CD8-positive, alpha-beta T cell (primary cell): ENCODE measurements at regions of chr1 and their contacts with region 1.

Region 1: GRCh38 chr1:25819576-25820246 is at the start of gene MTFR1L:
- DNase-seq: peak; percentile 78 to 96 (median 94)
- ATAC-seq: peak; percentile 87
- H3K4me3 ChIP-seq: peak within 1 kb of the TSS; percentile 74 to 95
- H3K4me3 Mint-ChIP-seq: peak within 1 kb of the TSS; percentile 94
- H3K27ac ChIP-seq: peak within 1 kb of the TSS; percentile 65 to 77
- H3K27ac Mint-ChIP-seq: peak within 1 kb of the TSS; percentile 97
- H3K4me1 ChIP-seq: peaks cover 20% of the 10 kb centered on the region
- H3K4me1 Mint-ChIP-seq: peaks cover 35% of the 10 kb centered on the region
- H3K27me3 ChIP-seq: no peaks in the 10 kb centered on the region
- H3K27me3 Mint-ChIP-seq: no peaks in the 10 kb centered on the region
- CTCF ChIP-seq: no peak
- total RNA-seq, gene MTFR1L: 22.9 to 25.7 TPM

Region 2: DNA sequence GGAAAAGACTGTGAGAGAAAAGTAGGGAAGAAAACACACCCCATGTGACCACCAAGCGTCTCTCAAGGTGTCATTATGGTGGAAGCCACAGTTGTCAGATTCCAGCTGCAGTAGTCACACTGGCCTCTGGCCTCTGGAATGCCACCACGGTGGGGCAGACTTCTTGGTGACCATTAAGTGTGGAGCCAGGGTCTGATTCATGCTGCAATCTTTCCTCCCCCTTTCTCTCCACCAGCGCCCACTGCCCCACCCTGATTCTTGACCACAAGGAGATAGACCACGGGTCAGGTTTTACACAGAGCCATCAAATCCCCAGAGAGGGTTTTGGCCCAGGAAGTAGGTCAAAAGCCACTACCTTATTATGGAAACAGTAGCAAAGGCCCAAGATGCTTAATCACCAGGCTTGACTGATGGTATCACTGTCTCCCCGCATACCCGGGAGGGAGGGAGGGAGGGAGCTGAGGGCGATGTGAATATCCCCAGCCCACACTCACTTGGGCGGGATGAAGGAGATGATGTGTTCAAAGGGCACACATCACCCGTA is 1553.2 kb before region 1 on chr1:
- CTCF ChIA-PET with region 1: no interaction called
- POLR2A ChIA-PET with region 1: no interaction called
- intact Hi-C with region 1: no loop called
- DNase-seq: no peak
- ATAC-seq: no peak
- H3K4me3 ChIP-seq: no peak overlapping the region
- H3K4me3 Mint-ChIP-seq: no peak overlapping the region
- H3K27ac ChIP-seq: no peak overlapping the region
- H3K27ac Mint-ChIP-seq: no peak overlapping the region
- H3K4me1 ChIP-seq: no peaks in the 10 kb centered on the region
- H3K4me1 Mint-ChIP-seq: no peaks in the 10 kb centered on the region
- H3K27me3 ChIP-seq: no peaks in the 10 kb centered on the region
- H3K27me3 Mint-ChIP-seq: peaks cover 7% of the 10 kb centered on the region
- CTCF ChIP-seq: no peak

Region 3: GRCh38 chr1:25566730-25567341 is 252.9 kb before region 1 on chr1:
- CTCF ChIA-PET with region 1: no interaction called
- POLR2A ChIA-PET with region 1: interaction called, 10 read pairs
- intact Hi-C with region 1: loop called in 1 of 2 experiments (anchors 5 kb)
- DNase-seq: peak in 7 of 9 experiments; percentile 40 to 82 (median 74)
- ATAC-seq: peak; percentile 27
- H3K4me3 ChIP-seq: peak overlapping the region in 1 of 2 experiments; percentile 85
- H3K4me3 Mint-ChIP-seq: peak overlapping the region; percentile 95
- H3K27ac ChIP-seq: peak overlapping the region in 1 of 2 experiments; percentile 25
- H3K27ac Mint-ChIP-seq: peak overlapping the region; percentile 96
- H3K4me1 ChIP-seq: peaks cover 73% of the 10 kb centered on the region
- H3K4me1 Mint-ChIP-seq: peaks cover 86% of the 10 kb centered on the region
- H3K27me3 ChIP-seq: no peaks in the 10 kb centered on the region
- H3K27me3 Mint-ChIP-seq: no peaks in the 10 kb centered on the region
- CTCF ChIP-seq: peak; percentile 49

Region 4: GRCh38 chr1:25832336-25833037 is 12.8 kb after region 1 on chr1:
- CTCF ChIA-PET with region 1: no interaction called
- POLR2A ChIA-PET with region 1: interaction called, 27 read pairs
- intact Hi-C with region 1: no loop called
- DNase-seq: no peak
- ATAC-seq: no peak
- H3K4me3 ChIP-seq: no peak overlapping the region
- H3K4me3 Mint-ChIP-seq: no peak overlapping the region
- H3K27ac ChIP-seq: no peak overlapping the region
- H3K27ac Mint-ChIP-seq: no peak overlapping the region
- H3K4me1 ChIP-seq: no peaks in the 10 kb centered on the region
- H3K4me1 Mint-ChIP-seq: peaks cover 9% of the 10 kb centered on the region
- H3K27me3 ChIP-seq: no peaks in the 10 kb centered on the region
- H3K27me3 Mint-ChIP-seq: no peaks in the 10 kb centered on the region
- CTCF ChIP-seq: no peak

Region 5: GRCh38 chr1:25858906-25859789 is 39.4 kb after region 1 on chr1 and contains the start of gene AUNIP:
- CTCF ChIA-PET with region 1: no interaction called
- POLR2A ChIA-PET with region 1: interaction called, 3 read pairs
- intact Hi-C with region 1: loop called (anchors 1 kb)
- DNase-seq: peak; percentile 72 to 95 (median 88)
- ATAC-seq: peak; percentile 99
- H3K4me3 ChIP-seq: peak within 1 kb of the TSS; percentile 63 to 75
- H3K4me3 Mint-ChIP-seq: peak within 1 kb of the TSS; percentile 92
- H3K27ac ChIP-seq: peak within 1 kb of the TSS; percentile 66 to 71
- H3K27ac Mint-ChIP-seq: peak within 1 kb of the TSS; percentile 89
- H3K4me1 ChIP-seq: peaks cover 16% of the 10 kb centered on the region
- H3K4me1 Mint-ChIP-seq: peaks cover 15% of the 10 kb centered on the region
- H3K27me3 ChIP-seq: no peaks in the 10 kb centered on the region
- H3K27me3 Mint-ChIP-seq: no peaks in the 10 kb centered on the region
- CTCF ChIP-seq: no peak
- total RNA-seq, gene AUNIP: 0.30 TPM in 1 of 2 experiments, not detected in the other

Region 6: DNA sequence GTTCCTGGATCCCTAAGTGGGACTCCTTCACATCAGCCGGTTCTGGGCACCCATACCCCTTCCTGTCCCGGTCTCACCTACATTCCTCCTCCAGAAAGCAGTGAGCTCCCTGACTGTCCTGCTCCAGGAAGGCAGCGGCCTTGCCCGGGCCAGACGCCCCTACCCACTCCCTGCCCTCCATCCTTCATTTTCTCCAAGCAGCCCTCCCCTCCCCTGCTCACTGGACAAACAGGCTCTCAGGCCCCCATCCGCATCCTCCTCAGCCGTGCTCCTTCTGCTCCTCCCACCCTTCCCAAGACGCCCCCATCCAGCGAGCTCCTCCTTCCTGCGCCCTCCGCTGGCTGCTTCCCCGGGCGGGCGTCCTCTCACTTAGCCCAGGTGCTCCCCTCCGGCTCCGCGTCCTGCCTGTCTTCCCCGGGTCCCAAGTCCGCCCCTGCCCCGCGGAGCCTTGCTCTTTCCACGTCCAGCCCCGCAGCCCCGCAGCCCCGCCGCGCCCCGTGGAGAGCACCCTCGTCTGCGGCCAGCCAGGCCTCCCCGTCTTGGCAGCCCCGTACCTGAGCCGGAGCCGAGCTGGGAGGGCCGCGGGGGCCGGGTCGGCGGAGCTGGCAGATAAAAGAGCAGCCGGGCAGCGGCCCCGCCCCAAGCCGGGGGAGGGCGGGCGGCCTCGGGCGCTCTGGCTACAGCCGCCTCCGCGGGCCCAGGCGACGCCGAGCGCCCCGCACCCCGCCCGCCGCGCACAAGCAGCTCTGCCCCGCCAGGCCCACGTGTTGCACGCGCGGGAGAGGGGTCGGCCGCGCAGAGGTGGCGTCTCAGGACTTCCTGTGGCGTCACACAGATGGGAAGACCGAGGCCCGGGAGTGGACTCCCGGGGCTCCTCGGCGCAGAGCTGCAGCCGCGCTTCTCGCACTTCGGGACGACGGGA is 55.5 kb after region 1 on chr1 and contains the start of gene PAQR7:
- CTCF ChIA-PET with region 1: interaction called, 3 read pairs
- POLR2A ChIA-PET with region 1: interaction called, 20 read pairs
- intact Hi-C with region 1: loop called in 1 of 2 experiments (anchors 1 kb)
- DNase-seq: peak in 8 of 9 experiments; percentile 49 to 80 (median 58)
- ATAC-seq: peak; percentile 83
- H3K4me3 ChIP-seq: peak within 1 kb of the TSS; percentile 58 to 76
- H3K4me3 Mint-ChIP-seq: peak within 1 kb of the TSS; percentile 85
- H3K27ac ChIP-seq: peak within 1 kb of the TSS; percentile 14 to 33
- H3K27ac Mint-ChIP-seq: peak within 1 kb of the TSS; percentile 64
- H3K4me1 ChIP-seq: peaks cover 11% of the 10 kb centered on the region
- H3K4me1 Mint-ChIP-seq: peaks cover 8% of the 10 kb centered on the region
- H3K27me3 ChIP-seq: no peaks in the 10 kb centered on the region
- H3K27me3 Mint-ChIP-seq: no peaks in the 10 kb centered on the region
- CTCF ChIP-seq: no peak
- total RNA-seq, gene PAQR7: 2.1 to 2.3 TPM

Region 7: DNA sequence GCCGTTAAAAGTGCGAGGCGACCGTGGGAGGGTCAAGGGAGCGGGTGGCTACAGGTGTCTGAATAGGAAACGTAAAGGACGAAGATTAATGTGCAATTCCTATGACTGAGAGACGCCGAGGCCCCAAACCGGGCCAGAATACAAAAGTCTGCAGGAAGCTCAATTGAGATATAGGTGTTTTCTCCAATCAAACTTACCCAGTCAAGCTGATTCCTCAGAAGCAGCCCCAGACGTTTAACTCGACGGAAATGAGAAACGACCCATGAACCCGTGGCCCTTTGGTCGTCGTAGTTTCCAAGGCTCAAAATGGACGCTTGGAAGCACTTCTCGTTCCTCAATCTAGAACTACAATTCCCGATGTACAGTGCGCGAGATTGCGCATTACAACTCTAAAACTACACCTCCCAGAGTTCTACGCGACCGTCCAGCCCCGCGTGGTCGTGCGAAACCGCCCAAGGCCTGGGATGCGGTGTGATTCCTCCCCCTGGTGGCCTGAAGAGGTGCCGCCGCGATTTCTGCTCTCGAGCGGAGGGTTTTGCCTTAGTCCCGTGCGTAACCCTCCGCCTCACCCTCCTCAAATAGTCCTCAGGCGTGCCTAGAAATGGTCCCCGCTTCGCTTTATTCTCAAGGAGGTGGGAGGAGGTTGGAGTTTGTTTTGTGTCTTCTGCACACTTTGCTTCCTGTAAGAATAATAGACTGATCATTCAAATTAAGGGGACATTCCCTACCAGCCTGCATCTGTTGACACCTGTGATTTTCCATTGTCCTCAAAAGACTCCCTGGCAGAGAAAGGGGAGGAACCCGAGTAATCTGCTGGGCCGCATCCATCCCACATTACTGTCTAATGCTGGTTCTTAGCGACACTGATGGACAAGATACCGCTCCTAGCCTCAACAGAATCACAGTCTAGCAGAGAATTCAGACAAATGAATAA is 178.4 kb after region 1 on chr1 and contains the start of gene PAFAH2:
- CTCF ChIA-PET with region 1: no interaction called
- POLR2A ChIA-PET with region 1: no interaction called
- intact Hi-C with region 1: loop called (anchors 1 to 2 kb)
- DNase-seq: peak; percentile 93 to 100 (median 96)
- ATAC-seq: peak; percentile 96
- H3K4me3 ChIP-seq: peak within 1 kb of the TSS; percentile 62 to 72
- H3K4me3 Mint-ChIP-seq: peak within 1 kb of the TSS; percentile 92
- H3K27ac ChIP-seq: peak within 1 kb of the TSS; percentile 79 to 87
- H3K27ac Mint-ChIP-seq: peak within 1 kb of the TSS; percentile 99
- H3K4me1 ChIP-seq: peaks cover 19% of the 10 kb centered on the region
- H3K4me1 Mint-ChIP-seq: peaks cover 42% of the 10 kb centered on the region
- H3K27me3 ChIP-seq: no peaks in the 10 kb centered on the region
- H3K27me3 Mint-ChIP-seq: no peaks in the 10 kb centered on the region
- CTCF ChIP-seq: peak; percentile 92
- total RNA-seq, gene PAFAH2: 9.1 to 11.8 TPM